ENCODE measurements at regions of chr17 and their contacts with region 1.

Region 1: GRCh38 chr17:64145757-64146417 is 15.9 kb upstream of the ERN1 start:
- DNase-seq: peak; percentile 98
- H3K27ac ChIP-seq: peak overlapping the region; percentile 99
- CTCF ChIP-seq: no peak

Region 2: GRCh38 chr17:64129764-64130558 is 15.9 kb before region 1 on chr17 and contains the start of gene ERN1:
- CTCF ChIA-PET with region 1: interaction called, 13 read pairs
- POLR2A ChIA-PET with region 1: interaction called, 6 read pairs
- DNase-seq: peak; percentile 90
- H3K27ac ChIP-seq: peak within 1 kb of the TSS; percentile 82
- CTCF ChIP-seq: no peak

Region 3: GRCh38 chr17:64218066-64218465 is 72.2 kb after region 1 on chr17:
- CTCF ChIA-PET with region 1: no interaction called
- POLR2A ChIA-PET with region 1: no interaction called
- DNase-seq: no peak
- H3K27ac ChIP-seq: no peak overlapping the region
- CTCF ChIP-seq: no peak

Region 4: DNA sequence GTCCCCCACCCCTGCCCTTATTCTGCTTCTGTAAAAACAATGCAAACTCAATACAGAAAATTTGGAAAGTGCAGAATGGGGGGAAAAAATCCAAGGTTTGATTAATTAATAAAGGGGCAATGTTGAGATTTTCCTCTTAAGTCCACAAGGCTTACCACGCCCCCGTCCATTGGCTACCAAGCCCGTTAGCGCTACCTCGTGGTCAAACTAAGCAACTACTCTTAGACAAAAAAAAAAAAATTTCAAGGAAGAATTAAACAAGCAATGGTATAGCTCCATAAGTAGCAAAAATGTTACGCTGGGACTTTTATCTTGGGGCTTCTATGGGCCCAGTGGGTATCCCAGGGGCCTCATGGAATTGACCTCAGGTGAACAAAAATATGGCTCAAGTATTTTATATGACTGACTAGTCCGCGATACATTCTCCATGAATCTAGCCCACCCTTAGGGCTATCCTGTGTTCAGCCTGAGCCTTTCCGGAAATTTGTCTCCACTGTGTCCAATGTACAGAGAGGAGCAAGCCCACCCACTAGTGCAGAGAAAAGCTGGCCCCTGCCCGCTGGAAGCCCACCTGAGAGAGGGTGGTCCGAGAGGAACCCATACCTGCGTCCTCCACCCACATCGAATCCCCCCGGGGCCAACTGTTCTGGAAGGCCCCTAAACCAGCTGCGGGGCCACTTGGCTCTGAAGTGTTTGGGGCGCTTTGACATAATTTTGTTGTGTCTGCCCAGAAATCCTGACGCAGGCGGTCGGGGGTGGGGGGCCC is 136.3 kb after region 1 on chr17:
- CTCF ChIA-PET with region 1: interaction called, 13 read pairs
- POLR2A ChIA-PET with region 1: no interaction called
- DNase-seq: peak; percentile 64
- H3K27ac ChIP-seq: no peak overlapping the region
- CTCF ChIP-seq: peak; percentile 89